IMR-90 (cell line): ENCODE measurements at regions of chrX and their contacts with region 1.

Region 1: DNA sequence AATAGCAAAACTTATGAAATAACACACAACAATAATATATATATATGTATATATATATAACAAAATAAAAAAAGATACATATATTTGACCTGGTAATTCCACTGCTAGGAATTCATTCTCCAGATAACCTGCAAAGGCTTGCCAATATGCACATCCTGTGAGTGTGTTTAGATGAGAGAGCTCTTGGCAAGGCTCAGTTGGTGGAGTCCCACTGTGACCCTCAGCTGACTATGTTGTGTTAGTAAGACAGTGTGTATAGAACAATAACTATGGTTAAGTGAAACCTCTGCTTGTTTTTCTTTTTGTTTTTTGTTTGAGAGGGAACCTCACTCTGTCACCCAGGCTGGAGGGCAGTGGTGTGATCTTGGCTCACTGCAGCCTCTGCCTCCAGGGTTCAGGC is 39.5 kb upstream of the RBMX start:
- DNase-seq: peak; percentile 32
- ATAC-seq: no peak
- H3K4me3 ChIP-seq: no peak overlapping the region
- H3K27ac ChIP-seq: no peak overlapping the region
- H3K4me1 ChIP-seq: no peaks in the 10 kb centered on the region
- H3K27me3 ChIP-seq: no peaks in the 10 kb centered on the region
- CTCF ChIP-seq: no peak
- POLR2A ChIP-seq: no peak
- RAD21 ChIP-seq: no peak

Region 2: DNA sequence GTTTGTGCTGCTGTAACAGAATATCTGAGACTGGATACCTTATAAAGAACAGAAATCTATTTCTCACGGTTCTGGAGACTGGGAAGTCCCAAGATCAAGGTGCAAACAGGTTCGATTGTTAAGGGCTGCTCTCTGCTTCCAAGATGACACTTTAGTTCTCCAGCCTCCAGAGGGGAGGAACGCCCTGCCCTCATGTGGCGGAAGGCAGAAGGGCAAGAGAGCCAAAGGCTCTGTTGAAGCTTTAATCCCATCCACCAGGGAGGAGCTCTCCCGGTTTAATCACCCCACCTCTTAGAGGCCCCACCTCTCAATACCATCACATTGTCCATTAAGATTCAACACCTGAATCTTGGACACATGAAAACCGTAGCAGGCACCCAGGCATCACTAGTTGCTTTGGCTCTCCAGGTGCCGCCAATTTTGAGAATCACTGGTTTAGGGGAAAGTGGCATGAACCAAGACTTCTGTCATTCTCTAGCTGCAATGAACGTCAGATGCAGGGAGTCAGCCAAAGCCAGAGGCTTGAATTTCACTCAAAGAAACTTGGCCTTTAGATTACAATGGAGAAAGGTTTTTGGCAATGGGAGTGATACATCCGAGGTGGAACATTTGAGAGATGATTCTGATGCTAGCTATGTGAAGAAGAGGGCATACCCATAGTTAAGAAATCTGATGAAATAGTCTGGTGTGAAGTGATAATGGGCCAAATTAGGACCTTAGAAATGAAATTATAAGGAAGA is 757.0 kb before region 1 on chrX:
- CTCF ChIA-PET with region 1: no interaction called
- POLR2A ChIA-PET with region 1: no interaction called
- dilution Hi-C with region 1: no loop called
- in situ Hi-C with region 1: no loop called
- intact Hi-C with region 1: no loop called
- DNase-seq: peak; percentile 43
- ATAC-seq: peak; percentile 80
- H3K4me3 ChIP-seq: no peak overlapping the region
- H3K27ac ChIP-seq: no peak overlapping the region
- H3K4me1 ChIP-seq: peaks cover 13% of the 10 kb centered on the region; the same call in 1 of the 2 replicates
- H3K27me3 ChIP-seq: no peaks in the 10 kb centered on the region
- CTCF ChIP-seq: peak; percentile 72
- POLR2A ChIP-seq: no peak
- RAD21 ChIP-seq: peak; percentile 72

Region 3: DNA sequence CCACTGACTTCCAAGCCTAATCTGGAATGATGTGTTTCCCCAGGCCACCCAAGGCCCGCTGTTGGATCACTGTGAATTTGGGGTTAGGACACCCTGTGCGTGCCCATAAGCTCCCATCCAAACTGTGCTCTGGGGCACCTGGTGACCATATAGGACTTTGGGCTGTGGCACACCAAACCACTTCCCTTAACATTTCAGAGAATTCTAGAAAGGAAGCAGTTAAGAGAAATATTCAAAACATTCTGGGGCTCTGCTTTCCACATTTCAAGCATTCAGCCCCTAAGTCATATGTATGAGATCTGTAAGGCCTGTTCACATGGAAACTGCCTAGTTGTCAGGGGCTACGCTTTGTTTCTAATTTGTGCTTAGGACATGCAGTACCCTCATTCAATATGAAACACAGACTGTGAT is 373.6 kb before region 1 on chrX:
- CTCF ChIA-PET with region 1: no interaction called
- POLR2A ChIA-PET with region 1: no interaction called
- dilution Hi-C with region 1: no loop called
- in situ Hi-C with region 1: no loop called
- intact Hi-C with region 1: no loop called
- DNase-seq: no peak
- ATAC-seq: no peak
- H3K4me3 ChIP-seq: no peak overlapping the region
- H3K27ac ChIP-seq: no peak overlapping the region
- H3K4me1 ChIP-seq: no peaks in the 10 kb centered on the region
- H3K27me3 ChIP-seq: peaks cover 12% of the 10 kb centered on the region
- CTCF ChIP-seq: no peak
- POLR2A ChIP-seq: no peak
- RAD21 ChIP-seq: no peak

Region 4: DNA sequence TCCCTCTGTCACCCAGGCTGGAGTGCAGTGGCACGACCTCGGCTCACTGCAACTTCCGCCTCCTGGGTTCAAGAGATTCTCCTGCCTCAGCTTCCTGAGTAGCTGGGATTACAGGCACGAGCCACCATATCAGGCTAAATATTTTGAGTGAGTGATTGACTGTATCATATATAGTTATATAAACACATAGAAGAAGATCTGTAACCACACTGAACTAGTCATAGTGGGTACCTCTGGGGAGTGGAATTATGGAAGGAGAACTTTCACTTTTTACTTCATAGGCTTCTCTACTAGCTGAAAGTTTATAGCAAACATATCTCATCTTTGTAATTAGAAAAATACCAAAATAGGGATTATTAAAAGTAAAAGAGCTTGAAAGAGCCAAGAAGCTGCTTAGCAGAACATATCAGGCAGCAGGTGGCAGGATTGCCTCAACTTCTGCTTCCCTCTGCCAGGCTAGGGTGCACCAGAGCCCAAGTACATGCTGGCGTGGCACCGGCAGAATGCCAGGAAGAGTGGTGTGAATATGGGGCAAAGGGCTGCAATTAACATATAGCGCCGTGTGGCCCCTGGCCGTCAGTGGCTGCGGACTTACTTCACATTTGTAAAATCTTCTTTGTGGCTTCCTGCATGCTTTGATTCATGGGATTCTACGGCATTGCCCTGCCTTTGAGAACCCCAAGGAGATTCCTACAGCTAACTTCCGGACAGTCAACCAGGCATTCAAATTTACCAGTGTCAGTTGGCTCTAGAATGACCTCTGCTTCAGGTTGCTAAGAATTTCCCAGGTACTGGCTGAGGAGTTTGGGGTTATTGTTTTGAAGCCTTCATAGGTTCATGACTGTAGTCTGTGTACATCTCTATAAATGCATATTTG is 311.5 kb before region 1 on chrX:
- CTCF ChIA-PET with region 1: no interaction called
- POLR2A ChIA-PET with region 1: no interaction called
- dilution Hi-C with region 1: no loop called
- in situ Hi-C with region 1: no loop called
- intact Hi-C with region 1: loop called (anchors 10 kb)
- DNase-seq: no peak
- ATAC-seq: no peak
- H3K4me3 ChIP-seq: no peak overlapping the region
- H3K27ac ChIP-seq: no peak overlapping the region
- H3K4me1 ChIP-seq: no peaks in the 10 kb centered on the region
- H3K27me3 ChIP-seq: peaks cover 1% of the 10 kb centered on the region; the same call in 1 of the 2 replicates
- CTCF ChIP-seq: 0 out of 2 replicates have a peak, but pooled peaks have one; percentile 11
- POLR2A ChIP-seq: no peak
- RAD21 ChIP-seq: no peak

Region 5: DNA sequence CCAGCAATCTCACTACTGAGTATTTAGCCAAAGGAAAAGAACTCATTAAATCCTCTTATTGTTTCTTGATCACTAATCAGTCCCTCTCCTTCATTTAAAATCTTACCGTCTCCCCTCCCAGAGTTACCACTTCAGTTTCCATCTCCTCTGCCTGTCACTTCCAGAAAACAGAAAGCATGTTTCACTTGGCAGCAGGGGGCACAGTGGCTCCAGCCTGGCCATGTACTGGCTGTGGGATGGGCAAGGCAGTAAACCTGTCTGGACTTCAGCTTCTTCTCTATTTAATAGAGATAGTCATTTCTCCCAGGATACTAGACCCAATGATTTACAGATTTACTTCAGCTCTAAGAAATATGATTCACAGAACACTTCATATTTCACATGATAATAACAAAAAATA is 208.9 kb before region 1 on chrX:
- CTCF ChIA-PET with region 1: interaction called, 4 read pairs
- POLR2A ChIA-PET with region 1: interaction called, 3 read pairs
- dilution Hi-C with region 1: no loop called
- in situ Hi-C with region 1: loop called (anchors 5 kb)
- intact Hi-C with region 1: loop called (anchors 1 kb)
- DNase-seq: peak; percentile 36
- ATAC-seq: peak; percentile 76
- H3K4me3 ChIP-seq: no peak overlapping the region
- H3K27ac ChIP-seq: no peak overlapping the region
- H3K4me1 ChIP-seq: peaks cover 2% of the 10 kb centered on the region
- H3K27me3 ChIP-seq: no peaks in the 10 kb centered on the region
- CTCF ChIP-seq: peak; percentile 51
- POLR2A ChIP-seq: no peak
- RAD21 ChIP-seq: peak; percentile 60

Region 6: DNA sequence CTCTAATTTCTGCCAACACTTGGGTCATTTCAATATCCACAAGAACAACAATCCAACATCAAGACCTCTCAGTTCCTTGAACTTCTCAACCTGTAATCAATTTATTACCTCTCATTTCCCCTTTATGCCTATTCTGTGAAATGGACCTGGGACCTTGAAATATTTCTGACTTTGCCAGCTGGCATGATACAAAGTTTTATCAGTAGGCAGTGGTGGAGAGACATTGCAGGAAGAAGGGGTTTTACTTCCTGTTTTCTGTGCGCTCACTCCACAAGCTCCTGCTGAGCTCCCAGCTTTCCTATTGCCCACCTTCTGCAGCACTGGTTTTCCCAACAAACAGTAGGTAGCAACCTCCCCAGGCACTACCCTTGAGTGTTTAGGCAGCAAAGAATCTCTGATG is 135.8 kb before region 1 on chrX:
- CTCF ChIA-PET with region 1: no interaction called
- POLR2A ChIA-PET with region 1: no interaction called
- dilution Hi-C with region 1: no loop called
- in situ Hi-C with region 1: no loop called
- intact Hi-C with region 1: no loop called
- DNase-seq: no peak
- ATAC-seq: no peak
- H3K4me3 ChIP-seq: no peak overlapping the region
- H3K27ac ChIP-seq: no peak overlapping the region
- H3K4me1 ChIP-seq: peaks cover 2% of the 10 kb centered on the region; the same call in 1 of the 2 replicates
- H3K27me3 ChIP-seq: 0 out of 2 replicates have a peak, but pooled peaks cover 1% of the 10 kb centered on the region
- CTCF ChIP-seq: no peak
- POLR2A ChIP-seq: no peak
- RAD21 ChIP-seq: no peak

Region 7: DNA sequence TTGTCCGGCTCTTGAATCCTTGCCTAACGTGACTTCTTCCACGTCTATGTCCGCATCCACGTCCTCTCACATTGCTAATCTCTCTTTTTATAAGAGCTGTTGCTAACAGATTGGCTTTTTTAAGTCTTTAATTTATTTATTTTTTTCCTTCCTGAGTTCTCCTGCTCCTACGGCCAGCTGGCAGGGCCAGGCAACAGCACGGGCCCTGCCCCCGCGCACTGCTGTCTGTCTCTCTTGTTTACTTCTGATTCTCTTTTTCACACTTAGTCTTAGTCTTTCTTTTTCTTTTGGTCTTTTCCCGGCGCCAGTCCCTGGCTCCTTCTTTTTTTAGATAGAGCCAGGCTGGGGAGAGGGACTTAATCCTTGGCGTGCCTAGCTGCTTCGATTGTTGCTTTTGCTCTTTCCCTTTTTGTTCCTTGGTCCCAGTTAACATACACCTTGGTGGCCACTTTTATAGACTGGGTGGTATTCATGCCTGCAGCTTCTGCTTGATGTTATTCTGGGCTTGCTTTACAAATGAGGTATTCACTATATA is 13.7 kb after region 1 on chrX:
- CTCF ChIA-PET with region 1: no interaction called
- POLR2A ChIA-PET with region 1: no interaction called
- dilution Hi-C with region 1: no loop called
- in situ Hi-C with region 1: no loop called
- intact Hi-C with region 1: no loop called
- DNase-seq: no peak
- ATAC-seq: no peak
- H3K4me3 ChIP-seq: no peak overlapping the region
- H3K27ac ChIP-seq: no peak overlapping the region
- H3K4me1 ChIP-seq: no peaks in the 10 kb centered on the region; the same call in 1 of the 2 replicates
- H3K27me3 ChIP-seq: no peaks in the 10 kb centered on the region
- CTCF ChIP-seq: no peak
- POLR2A ChIP-seq: no peak
- RAD21 ChIP-seq: no peak